B cell (primary cell): ENCODE measurements at regions of chr2 and their contacts with region 1.

Region 1: DNA sequence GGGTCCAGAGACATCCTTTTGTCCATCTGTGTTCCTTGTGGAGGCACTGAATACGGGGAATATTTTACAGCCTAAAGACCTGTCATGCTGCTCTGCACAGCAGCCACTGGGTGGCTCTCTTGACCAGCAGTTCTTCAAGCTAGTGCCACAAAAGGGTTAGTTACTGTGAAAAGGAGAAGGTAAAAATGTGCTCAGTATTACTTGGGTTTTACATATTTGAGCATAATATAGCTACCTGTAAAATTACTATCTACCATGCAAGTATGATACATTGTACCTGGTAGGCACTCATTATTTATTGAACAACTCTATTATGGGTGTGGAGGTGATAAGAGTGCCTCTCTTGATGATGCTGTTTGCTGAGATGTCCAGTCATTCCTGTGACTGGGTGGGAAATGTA is 23.6 kb downstream of the FZD5 start:
- DNase-seq: peak; percentile 72
- ATAC-seq: peak; percentile 73
- H3K4me3 ChIP-seq: no peak overlapping the region
- H3K4me3 Mint-ChIP-seq: no peak overlapping the region
- H3K27ac ChIP-seq: no peak overlapping the region
- H3K27ac Mint-ChIP-seq: no peak overlapping the region
- H3K4me1 ChIP-seq: no peaks in the 10 kb centered on the region
- H3K4me1 Mint-ChIP-seq: peaks cover 3% of the 10 kb centered on the region
- H3K27me3 ChIP-seq: no peaks in the 10 kb centered on the region
- H3K27me3 Mint-ChIP-seq: no peaks in the 10 kb centered on the region
- CTCF ChIP-seq: peak; percentile 80

Region 2: DNA sequence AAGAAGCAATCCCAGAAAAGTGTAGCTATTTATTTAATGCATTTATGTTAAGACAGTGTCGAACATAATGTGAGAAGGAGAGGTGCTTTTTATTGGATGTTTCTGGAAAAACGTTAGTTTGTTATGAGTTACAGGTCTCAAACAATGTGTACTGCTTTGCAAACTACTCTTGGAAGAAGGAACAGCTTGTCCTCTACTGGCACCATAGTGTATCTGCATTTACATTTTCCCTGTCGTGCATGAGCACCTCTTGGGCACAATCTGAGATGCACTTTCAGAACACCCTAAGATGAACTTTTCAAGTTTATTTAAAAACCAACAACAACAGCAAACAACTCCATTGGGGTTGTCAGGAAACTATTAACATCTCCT is 11.9 kb before region 1 on chr2:
- CTCF ChIA-PET with region 1: interaction called, 20 read pairs
- POLR2A ChIA-PET with region 1: no interaction called
- intact Hi-C with region 1: no loop called
- DNase-seq: peak; percentile 55
- ATAC-seq: no peak
- H3K4me3 ChIP-seq: no peak overlapping the region
- H3K4me3 Mint-ChIP-seq: no peak overlapping the region
- H3K27ac ChIP-seq: no peak overlapping the region
- H3K27ac Mint-ChIP-seq: no peak overlapping the region
- H3K4me1 ChIP-seq: no peaks in the 10 kb centered on the region
- H3K4me1 Mint-ChIP-seq: peaks cover 13% of the 10 kb centered on the region
- H3K27me3 ChIP-seq: no peaks in the 10 kb centered on the region
- H3K27me3 Mint-ChIP-seq: no peaks in the 10 kb centered on the region
- CTCF ChIP-seq: peak; percentile 28

Region 3: GRCh38 chr2:207974216-207974605 is 228.1 kb after region 1 on chr2:
- CTCF ChIA-PET with region 1: interaction called, 58 read pairs
- POLR2A ChIA-PET with region 1: no interaction called
- intact Hi-C with region 1: loop called (anchors 1 kb)
- DNase-seq: no peak
- ATAC-seq: no peak
- H3K4me3 ChIP-seq: no peak overlapping the region
- H3K4me3 Mint-ChIP-seq: no peak overlapping the region
- H3K27ac ChIP-seq: no peak overlapping the region
- H3K27ac Mint-ChIP-seq: no peak overlapping the region
- H3K4me1 ChIP-seq: peaks cover 14 to 15% of the 10 kb centered on the region in 2 donors
- H3K4me1 Mint-ChIP-seq: peaks cover 15% of the 10 kb centered on the region
- H3K27me3 ChIP-seq: no peaks in the 10 kb centered on the region
- H3K27me3 Mint-ChIP-seq: no peaks in the 10 kb centered on the region
- CTCF ChIP-seq: no peak

Region 4: DNA sequence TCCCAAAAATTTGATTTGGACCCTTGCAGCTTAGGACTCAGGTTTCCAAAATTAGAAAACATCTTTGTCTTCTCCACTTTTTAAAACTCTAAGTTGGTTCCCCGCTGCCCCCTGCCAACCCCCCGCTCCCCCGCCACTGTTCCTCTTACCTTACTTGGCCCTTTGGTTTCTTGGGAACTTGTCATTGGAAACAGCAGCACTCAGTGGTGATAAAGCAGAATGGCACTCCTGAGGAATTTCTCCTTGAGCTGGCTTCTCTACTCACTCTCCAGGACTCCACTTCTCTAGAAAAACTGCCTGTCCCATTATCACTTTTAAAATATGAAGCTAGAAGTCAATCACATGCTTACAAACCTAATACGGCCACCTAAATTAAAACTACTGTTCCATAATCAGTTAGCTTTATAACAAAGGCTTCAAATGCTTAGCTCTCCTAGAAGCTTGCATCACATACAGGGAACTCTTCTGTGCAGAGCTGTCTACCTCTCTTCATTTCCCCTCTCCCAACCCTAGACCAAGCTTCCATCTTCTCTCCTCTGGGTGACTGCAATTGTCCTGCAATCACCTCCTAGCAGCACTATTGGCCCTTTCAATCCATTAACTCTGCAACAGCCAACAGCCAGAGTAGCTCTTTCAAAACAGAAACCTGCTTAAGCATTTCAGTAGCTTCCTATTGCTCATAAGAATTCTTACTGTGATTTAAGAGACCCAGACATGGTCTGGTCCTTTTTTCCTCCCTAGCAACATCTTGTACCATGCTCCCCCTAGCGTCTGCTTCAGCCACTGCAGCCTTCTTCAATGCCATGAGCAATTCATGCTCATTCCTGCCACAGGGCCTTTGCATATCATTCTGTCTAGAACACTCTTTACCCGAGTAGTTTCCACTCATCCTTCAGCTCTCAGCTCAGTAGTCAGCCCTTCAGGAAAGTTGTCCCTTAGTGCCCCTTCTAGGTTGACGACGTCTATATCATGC is 294.4 kb after region 1 on chr2:
- CTCF ChIA-PET with region 1: interaction called, 168 read pairs
- POLR2A ChIA-PET with region 1: no interaction called
- intact Hi-C with region 1: loop called (anchors 1 kb)
- DNase-seq: peak; percentile 71
- ATAC-seq: peak; percentile 73
- H3K4me3 ChIP-seq: no peak overlapping the region
- H3K4me3 Mint-ChIP-seq: no peak overlapping the region
- H3K27ac ChIP-seq: no peak overlapping the region
- H3K27ac Mint-ChIP-seq: no peak overlapping the region
- H3K4me1 ChIP-seq: no peaks in the 10 kb centered on the region
- H3K4me1 Mint-ChIP-seq: no peaks in the 10 kb centered on the region
- H3K27me3 ChIP-seq: peaks cover 0 to 4% (median 0%) of the 10 kb centered on the region in 4 experiments
- H3K27me3 Mint-ChIP-seq: no peaks in the 10 kb centered on the region
- CTCF ChIP-seq: peak; percentile 75

Region 5: GRCh38 chr2:208072250-208072892 is 326.2 kb after region 1 on chr2:
- CTCF ChIA-PET with region 1: interaction called, 143 read pairs
- POLR2A ChIA-PET with region 1: no interaction called
- intact Hi-C with region 1: loop called (anchors 1 kb)
- DNase-seq: peak; percentile 72
- ATAC-seq: peak; percentile 69
- H3K4me3 ChIP-seq: no peak overlapping the region
- H3K4me3 Mint-ChIP-seq: no peak overlapping the region
- H3K27ac ChIP-seq: no peak overlapping the region
- H3K27ac Mint-ChIP-seq: no peak overlapping the region
- H3K4me1 ChIP-seq: no peaks in the 10 kb centered on the region
- H3K4me1 Mint-ChIP-seq: no peaks in the 10 kb centered on the region
- H3K27me3 ChIP-seq: peaks cover 0 to 4% (median 0%) of the 10 kb centered on the region in 4 experiments
- H3K27me3 Mint-ChIP-seq: peaks cover 19% of the 10 kb centered on the region
- CTCF ChIP-seq: peak; percentile 89